Sigmoid colon (tissue), 7 donors: ENCODE measurements at regions of chr1 and their contacts with region 1.

Region 1: DNA sequence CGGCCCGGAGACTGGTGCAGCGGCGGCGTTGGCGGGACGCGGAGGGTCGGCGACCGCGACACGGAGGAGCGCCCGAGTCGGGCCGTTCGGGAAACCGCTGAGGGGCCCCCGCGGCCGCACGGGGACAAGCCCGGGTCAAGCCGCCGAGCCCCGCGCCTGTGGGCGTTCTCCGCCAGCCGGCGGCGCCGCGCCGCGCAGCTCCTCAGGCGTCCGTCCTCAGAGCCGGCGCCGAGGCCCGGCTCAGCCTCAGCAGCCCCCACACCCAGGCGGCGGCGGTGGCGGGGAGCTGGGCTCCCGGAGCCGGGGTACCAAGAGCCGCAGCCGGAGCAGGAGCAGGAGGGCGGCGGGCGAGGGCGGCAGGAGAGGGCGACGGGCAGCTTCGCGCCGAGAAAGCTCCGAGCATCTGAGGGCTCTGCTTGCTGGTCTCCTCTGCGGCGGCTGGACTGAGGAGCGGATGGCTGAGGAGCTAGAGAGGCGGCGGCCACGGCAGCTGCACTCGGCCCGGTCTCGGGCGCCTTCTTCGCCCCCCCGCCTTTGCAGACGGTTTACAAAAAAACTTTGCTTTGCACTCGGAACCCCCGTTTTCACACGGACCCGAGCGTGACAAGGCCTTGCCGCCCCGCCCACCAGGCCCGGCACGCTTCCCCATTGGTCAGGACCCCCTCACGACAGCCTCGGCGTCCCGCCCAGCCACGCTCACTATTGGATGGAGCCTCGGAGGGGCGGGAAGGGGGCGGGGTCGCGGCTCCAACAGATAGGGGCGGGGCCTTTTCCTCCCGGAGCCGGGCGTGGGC is at the start of gene SLC30A1:
- DNase-seq: peak; percentile 100
- H3K4me3 ChIP-seq: peak within 1 kb of the TSS; percentile 76 to 96 (median 94)
- H3K27ac ChIP-seq: peak within 1 kb of the TSS; percentile 96 to 98 (median 98)
- H3K4me1 ChIP-seq: peaks cover 0 to 54% (median 40%) of the 10 kb centered on the region in 4 donors
- H3K27me3 ChIP-seq: no peaks in the 10 kb centered on the region
- CTCF ChIP-seq: no peak
- EP300 ChIP-seq: no peak
- POLR2A ChIP-seq: peak; percentile 88 to 90
- total RNA-seq, gene SLC30A1: 7.9 to 11.8 (median 9.3) TPM

Region 2: DNA sequence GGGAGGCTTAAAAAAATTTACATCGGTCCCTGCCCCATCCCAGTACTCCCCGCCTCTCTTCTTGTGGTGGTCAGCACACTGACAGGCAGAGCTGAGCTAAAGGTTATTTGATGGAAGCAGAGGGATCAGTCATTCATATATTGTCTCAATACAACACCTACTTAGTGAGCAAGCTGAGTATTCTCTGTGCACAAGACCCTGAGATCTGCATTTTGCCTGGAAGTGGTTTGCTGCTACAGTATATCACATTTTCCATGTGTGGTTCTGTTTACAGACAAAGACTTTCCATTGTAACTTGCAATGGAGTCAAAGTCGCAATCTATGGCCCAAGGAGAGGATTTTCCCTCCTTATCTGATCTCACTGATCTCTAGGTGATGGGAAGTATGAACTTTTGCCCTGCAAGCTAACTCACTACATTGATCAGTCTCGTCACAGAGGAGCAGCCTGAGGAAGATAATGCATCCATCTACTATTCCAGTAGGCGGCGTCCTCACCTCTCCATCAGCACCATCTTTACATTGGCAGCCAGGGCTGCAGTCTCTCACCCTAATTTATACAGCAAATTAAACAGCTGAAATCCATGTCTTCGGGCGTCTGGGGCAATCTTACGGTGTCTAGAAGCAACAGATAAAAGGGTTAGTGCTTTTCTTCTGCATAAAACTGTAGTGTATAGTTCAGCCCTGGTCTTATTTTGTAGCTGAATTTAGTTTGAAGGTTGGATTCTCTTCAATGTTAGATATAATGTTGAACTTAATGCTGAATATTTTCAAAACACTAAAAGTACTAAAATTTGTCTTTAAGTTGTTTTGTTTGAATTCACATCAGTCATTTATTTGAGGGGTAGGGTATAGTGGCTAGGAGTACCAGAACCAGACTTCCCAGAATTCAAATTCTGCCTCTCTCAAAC is 255.4 kb before region 1 on chr1:
- intact Hi-C with region 1: loop called (anchors 5 kb)
- DNase-seq: no peak
- H3K4me3 ChIP-seq: no peak overlapping the region
- H3K27ac ChIP-seq: no peak overlapping the region
- H3K4me1 ChIP-seq: peaks cover 0 to 18% (median 13%) of the 10 kb centered on the region in 4 donors
- H3K27me3 ChIP-seq: no peaks in the 10 kb centered on the region
- CTCF ChIP-seq: peak; percentile 35 to 68 (median 64)
- EP300 ChIP-seq: no peak
- POLR2A ChIP-seq: no peak

Region 3: DNA sequence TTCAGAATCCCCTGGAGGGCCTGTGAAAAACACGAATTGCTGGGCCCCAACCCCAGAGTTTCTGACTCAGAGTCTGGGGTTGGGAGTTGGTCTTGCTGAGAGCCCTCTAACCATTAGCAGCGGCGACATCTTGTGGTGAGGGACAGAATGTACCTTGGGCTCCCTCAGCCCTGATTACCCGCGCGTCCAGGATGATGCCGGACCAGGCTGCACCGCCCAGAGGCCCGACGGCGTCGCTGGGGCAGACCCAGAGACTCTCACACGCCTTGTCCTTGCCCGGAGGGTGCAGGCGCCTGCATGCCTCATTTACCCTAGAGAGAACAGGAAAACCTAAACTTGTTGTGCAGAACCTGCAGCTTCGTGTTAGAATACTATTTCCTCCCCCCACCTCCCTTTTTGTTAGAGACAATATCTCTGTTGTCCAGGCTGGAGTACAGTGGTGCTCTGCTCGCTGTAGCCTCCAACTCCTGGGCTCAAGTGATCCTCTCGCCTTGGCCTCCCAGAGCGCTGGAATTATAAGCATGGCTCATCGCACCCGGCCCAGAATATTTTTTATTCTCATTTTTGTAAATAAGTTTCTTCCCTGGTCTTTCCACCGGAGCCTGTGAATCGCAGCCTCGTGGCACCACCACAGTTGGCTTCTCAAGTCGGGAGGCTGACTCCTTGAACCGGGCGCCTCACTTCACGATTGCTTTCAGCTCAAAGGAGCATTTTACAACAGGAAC is 64.6 kb before region 1 on chr1:
- intact Hi-C with region 1: loop called (anchors 5 kb)
- DNase-seq: peak; percentile 91
- H3K4me3 ChIP-seq: no peak overlapping the region
- H3K27ac ChIP-seq: no peak overlapping the region
- H3K4me1 ChIP-seq: peaks cover 0 to 18% (median 13%) of the 10 kb centered on the region in 4 donors
- H3K27me3 ChIP-seq: no peaks in the 10 kb centered on the region
- CTCF ChIP-seq: peak; percentile 32 to 83 (median 66)
- EP300 ChIP-seq: no peak
- POLR2A ChIP-seq: no peak

Region 4: GRCh38 chr1:211625040-211625439 is 46.2 kb after region 1 on chr1:
- intact Hi-C with region 1: no loop called
- DNase-seq: peak; percentile 65
- H3K4me3 ChIP-seq: no peak overlapping the region
- H3K27ac ChIP-seq: no peak overlapping the region
- H3K4me1 ChIP-seq: peaks cover 0 to 9% (median 3%) of the 10 kb centered on the region in 4 donors
- H3K27me3 ChIP-seq: no peaks in the 10 kb centered on the region
- CTCF ChIP-seq: no peak
- EP300 ChIP-seq: no peak
- POLR2A ChIP-seq: no peak

Region 5: GRCh38 chr1:211654838-211655787 is 76.3 kb after region 1 on chr1:
- intact Hi-C with region 1: loop called (anchors 1 kb)
- DNase-seq: peak; percentile 94
- H3K4me3 ChIP-seq: peak overlapping the region in 1 of 4 donors; percentile 4
- H3K27ac ChIP-seq: no peak overlapping the region
- H3K4me1 ChIP-seq: peaks cover 0 to 4% (median 0%) of the 10 kb centered on the region in 4 donors
- H3K27me3 ChIP-seq: no peaks in the 10 kb centered on the region
- CTCF ChIP-seq: peak; percentile 87 to 92 (median 88)
- EP300 ChIP-seq: no peak
- POLR2A ChIP-seq: no peak

Region 6: GRCh38 chr1:211959680-211960079 is 380.8 kb after region 1 on chr1:
- intact Hi-C with region 1: no loop called
- DNase-seq: no peak
- H3K4me3 ChIP-seq: no peak overlapping the region
- H3K27ac ChIP-seq: no peak overlapping the region
- H3K4me1 ChIP-seq: no peaks in the 10 kb centered on the region
- H3K27me3 ChIP-seq: no peaks in the 10 kb centered on the region
- CTCF ChIP-seq: no peak
- EP300 ChIP-seq: no peak
- POLR2A ChIP-seq: no peak

Region 7: GRCh38 chr1:212035123-212035834 is 456.4 kb after region 1 on chr1 and contains the starts of genes DTL and INTS7:
- intact Hi-C with region 1: loop called (anchors 10 kb)
- DNase-seq: peak; percentile 99
- H3K4me3 ChIP-seq: peak within 1 kb of the TSS; percentile 47 to 62 (median 58)
- H3K27ac ChIP-seq: peak within 1 kb of the TSS; percentile 84 to 90 (median 86)
- H3K4me1 ChIP-seq: peaks cover 0 to 22% (median 16%) of the 10 kb centered on the region in 4 donors
- H3K27me3 ChIP-seq: no peaks in the 10 kb centered on the region
- CTCF ChIP-seq: peak; percentile 93 to 98 (median 97)
- EP300 ChIP-seq: no peak
- POLR2A ChIP-seq: no peak
- total RNA-seq, gene DTL: 0.36 to 0.41 TPM in 2 of 4 donors, not detected in the others
- total RNA-seq, gene INTS7: 5.6 to 13.2 (median 6.9) TPM